ENCODE measurements at regions of chr17 and their contacts with region 1.

Region 1: GRCh38 chr17:74961657-74962490 is 10.7 kb downstream of the HID1 start:
- DNase-seq: peak; percentile 82
- ATAC-seq: peak; percentile 86
- H3K4me3 ChIP-seq: no peak overlapping the region
- H3K27ac ChIP-seq: no peak overlapping the region
- H3K4me1 ChIP-seq: 0 out of 2 replicates have a peak, but pooled peaks cover 1% of the 10 kb centered on the region
- H3K27me3 ChIP-seq: peaks cover 4% of the 10 kb centered on the region; the same call in 1 of the 2 replicates
- CTCF ChIP-seq: peak; percentile 77
- POLR2A ChIP-seq: no peak
- RAD21 ChIP-seq: peak; percentile 86

Region 2: DNA sequence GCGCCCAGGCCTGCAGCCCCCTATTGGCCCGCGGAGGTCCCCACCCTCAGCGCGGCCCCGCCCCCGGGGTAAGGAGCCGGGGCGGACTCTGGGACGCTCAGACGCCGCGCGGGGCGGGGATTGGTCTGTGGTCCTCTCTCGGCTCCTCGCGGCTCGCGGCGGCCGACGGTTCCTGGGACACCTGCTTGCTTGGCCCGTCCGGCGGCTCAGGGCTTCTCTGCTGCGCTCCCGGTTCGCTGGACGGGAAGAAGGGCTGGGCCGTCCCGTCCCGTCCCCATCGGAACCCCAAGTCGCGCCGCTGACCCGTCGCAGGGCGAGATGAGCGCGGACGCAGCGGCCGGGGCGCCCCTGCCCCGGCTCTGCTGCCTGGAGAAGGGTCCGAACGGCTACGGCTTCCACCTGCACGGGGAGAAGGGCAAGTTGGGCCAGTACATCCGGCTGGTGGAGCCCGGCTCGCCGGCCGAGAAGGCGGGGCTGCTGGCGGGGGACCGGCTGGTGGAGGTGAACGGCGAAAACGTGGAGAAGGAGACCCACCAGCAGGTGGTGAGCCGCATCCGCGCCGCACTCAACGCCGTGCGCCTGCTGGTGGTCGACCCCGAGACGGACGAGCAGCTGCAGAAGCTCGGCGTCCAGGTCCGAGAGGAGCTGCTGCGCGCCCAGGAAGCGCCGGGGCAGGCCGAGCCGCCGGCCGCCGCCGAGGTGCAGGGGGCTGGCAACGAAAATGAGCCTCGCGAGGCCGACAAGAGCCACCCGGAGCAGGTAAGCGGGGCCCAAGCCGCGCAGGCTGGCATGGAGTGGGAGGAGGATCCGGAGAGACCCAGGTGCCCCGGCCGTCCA is 213.1 kb before region 1 on chr17 and contains the start of gene NHERF1:
- CTCF ChIA-PET with region 1: interaction called, 3 read pairs
- POLR2A ChIA-PET with region 1: no interaction called
- dilution Hi-C with region 1: no loop called
- in situ Hi-C with region 1: loop called (anchors 10 kb)
- intact Hi-C with region 1: loop called (anchors 1 kb)
- DNase-seq: peak; percentile 82
- ATAC-seq: peak; percentile 99
- H3K4me3 ChIP-seq: peak within 1 kb of the TSS; percentile 87
- H3K27ac ChIP-seq: no peak within 1 kb of the TSS; the same call in 1 of the 2 replicates
- H3K4me1 ChIP-seq: peaks cover 8% of the 10 kb centered on the region; the same call in 1 of the 2 replicates
- H3K27me3 ChIP-seq: no peaks in the 10 kb centered on the region
- CTCF ChIP-seq: 0 out of 2 replicates have a peak, but pooled peaks have one; percentile 8
- POLR2A ChIP-seq: peak; percentile 91
- RAD21 ChIP-seq: no peak
- total RNA-seq, gene NHERF1: 3.3 and 3.8 TPM in 2 replicates

Region 3: DNA sequence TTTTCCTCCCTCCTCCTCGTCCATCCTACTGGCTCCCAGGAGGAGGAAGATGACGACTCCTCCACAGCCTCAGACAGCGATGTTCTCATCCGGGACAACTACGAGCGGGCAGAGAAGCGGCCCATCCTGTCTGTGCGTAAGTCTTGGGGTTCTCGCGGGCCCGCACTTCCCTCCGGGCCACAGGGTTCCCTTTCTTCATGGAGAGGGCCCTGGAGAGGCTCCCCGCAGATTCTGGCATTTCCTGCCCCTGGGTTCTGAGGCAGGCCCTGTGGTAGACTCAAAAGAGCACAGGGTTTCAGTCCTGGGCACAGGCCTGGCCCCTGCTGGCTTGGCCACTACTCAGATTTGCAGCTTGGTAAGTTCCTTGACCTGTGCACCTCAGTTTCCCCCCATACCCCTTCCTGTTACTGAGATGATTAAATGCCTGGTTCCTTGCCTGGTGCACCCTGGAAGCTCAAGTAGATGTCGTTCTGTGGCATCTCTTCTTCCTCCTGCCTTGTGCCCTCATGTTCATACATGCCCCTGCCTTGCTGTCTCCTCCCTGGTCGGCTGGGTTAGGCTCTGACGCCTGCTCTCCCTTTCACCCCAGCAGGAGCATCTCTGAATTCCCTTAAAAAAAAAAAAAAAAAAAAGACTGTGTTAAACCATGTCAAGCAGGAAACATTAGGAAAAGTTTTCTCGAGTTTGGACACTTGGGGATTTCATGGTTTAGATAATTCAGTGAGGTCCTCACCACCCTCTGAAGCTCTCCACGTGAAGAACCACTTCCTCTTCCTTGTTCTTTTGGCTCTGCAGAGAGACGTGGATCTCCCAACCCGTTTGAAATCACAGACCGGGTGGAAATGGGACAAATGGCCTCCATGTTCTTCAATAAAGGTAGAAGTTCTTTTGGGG is 171.5 kb before region 1 on chr17:
- CTCF ChIA-PET with region 1: interaction called, 3 read pairs
- POLR2A ChIA-PET with region 1: no interaction called
- dilution Hi-C with region 1: no loop called
- in situ Hi-C with region 1: no loop called
- intact Hi-C with region 1: loop called (anchors 1 kb)
- DNase-seq: no peak
- ATAC-seq: no peak
- H3K4me3 ChIP-seq: no peak overlapping the region
- H3K27ac ChIP-seq: no peak overlapping the region
- H3K4me1 ChIP-seq: no peaks in the 10 kb centered on the region
- H3K27me3 ChIP-seq: no peaks in the 10 kb centered on the region
- CTCF ChIP-seq: no peak
- POLR2A ChIP-seq: no peak
- RAD21 ChIP-seq: no peak

Region 4: GRCh38 chr17:75012346-75013091 is 50.6 kb after region 1 on chr17 and contains the start of gene MRPL58:
- CTCF ChIA-PET with region 1: interaction called, 8 read pairs
- POLR2A ChIA-PET with region 1: no interaction called
- dilution Hi-C with region 1: no loop called
- in situ Hi-C with region 1: no loop called
- intact Hi-C with region 1: loop called (anchors 1 kb)
- DNase-seq: peak; percentile 83
- ATAC-seq: peak; percentile 95
- H3K4me3 ChIP-seq: peak within 1 kb of the TSS; percentile 84
- H3K27ac ChIP-seq: peak within 1 kb of the TSS; percentile 86
- H3K4me1 ChIP-seq: peaks cover 6% of the 10 kb centered on the region
- H3K27me3 ChIP-seq: no peaks in the 10 kb centered on the region
- CTCF ChIP-seq: peak; percentile 58
- POLR2A ChIP-seq: peak; percentile 81
- RAD21 ChIP-seq: peak; percentile 45
- total RNA-seq, gene MRPL58: 42.5 and 53.9 TPM in 2 replicates

Region 5: DNA sequence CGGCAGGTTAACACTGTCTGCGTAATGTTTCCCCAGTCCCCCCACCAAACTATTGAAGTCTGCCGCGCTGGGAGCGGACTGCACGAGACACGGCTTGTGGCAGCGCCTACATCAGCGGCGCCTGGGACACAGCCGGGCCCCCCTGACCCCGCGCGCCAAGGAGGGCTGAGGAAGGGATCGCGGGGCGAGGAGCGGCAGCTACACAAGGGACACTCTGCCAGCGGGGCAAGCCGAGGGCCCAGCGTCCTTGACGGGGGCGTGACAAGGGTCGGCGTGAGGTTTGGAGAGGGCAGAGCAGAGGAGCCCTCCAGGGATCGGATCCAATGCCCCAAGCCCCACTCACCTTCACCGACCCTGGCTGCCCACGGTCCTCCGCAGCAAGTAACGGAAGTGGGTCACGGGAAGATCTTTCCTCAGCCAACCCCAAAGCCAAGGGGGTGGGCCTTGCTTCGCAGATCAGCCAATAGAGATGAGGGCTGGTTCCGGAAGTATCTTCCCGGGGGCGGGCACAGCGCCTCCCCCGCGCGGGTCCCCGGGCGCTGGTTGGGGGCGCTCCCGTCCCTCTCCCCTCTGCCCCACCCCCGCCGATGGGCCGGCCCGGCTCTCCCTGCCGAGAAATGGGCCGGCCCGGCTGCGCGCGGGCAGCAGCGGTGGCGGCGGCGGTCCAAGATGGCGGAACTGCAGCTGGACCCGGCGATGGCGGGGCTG is 84.9 kb after region 1 on chr17 and contains the starts of genes ATP5PD and KCTD2:
- CTCF ChIA-PET with region 1: interaction called, 3 read pairs
- POLR2A ChIA-PET with region 1: no interaction called
- dilution Hi-C with region 1: no loop called
- in situ Hi-C with region 1: no loop called
- intact Hi-C with region 1: loop called (anchors 5 kb)
- DNase-seq: peak; percentile 96
- ATAC-seq: peak; percentile 98
- H3K4me3 ChIP-seq: peak within 1 kb of the TSS; percentile 92
- H3K27ac ChIP-seq: peak within 1 kb of the TSS; percentile 95
- H3K4me1 ChIP-seq: no peaks in the 10 kb centered on the region; the same call in 1 of the 2 replicates
- H3K27me3 ChIP-seq: no peaks in the 10 kb centered on the region
- CTCF ChIP-seq: no peak
- POLR2A ChIP-seq: peak; percentile 74; the same call in 1 of the 2 replicates
- RAD21 ChIP-seq: no peak
- total RNA-seq, gene ATP5PD: 365 and 373 TPM in 2 replicates
- total RNA-seq, gene KCTD2: 9.1 and 9.4 TPM in 2 replicates

Measured in IMR-90 (cell line).